CD8-positive, alpha-beta T cell (primary cell): ENCODE measurements at regions of chr11 and their contacts with region 1.

Region 1: DNA sequence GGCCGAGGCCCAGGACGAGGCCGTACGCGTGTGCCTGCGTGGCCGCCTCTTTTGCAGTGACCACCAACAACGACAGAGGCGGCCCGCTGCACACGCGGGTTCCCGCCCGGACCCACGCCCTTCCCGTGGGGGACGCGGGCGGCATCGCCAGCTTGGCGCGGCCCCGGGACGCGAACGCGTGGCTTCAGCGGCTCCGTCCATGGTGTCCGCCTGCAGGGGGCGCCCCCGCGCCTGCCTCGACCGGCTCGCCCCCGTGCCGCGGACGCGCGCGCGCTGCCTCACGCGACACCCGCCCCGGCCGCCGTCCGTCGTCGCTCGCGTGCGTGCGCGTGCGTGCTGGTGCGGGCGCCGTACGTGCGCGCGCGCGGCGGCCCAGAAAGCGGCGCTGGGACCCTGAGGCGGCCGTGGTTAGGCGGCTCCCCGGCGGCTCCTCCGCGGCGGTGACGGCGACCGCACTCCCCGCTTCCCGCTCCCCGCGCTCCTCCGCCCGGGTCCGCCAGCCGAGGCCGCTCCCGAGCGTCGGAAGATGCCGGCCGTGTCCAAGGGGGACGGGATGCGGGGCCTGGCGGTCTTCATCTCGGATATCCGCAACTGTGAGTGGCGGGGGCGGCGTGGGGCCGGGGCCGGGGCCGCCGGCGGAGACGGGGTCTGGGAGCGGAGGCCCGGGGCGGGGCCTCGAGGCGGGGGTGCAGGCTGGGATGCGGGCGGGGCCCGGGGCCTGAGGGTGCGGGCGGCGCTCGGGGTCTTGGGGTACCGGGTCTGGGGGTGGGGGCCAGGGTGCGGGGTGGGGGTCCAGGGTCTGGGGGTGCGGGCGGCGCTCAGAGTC is at the start of gene AP2A2:
- DNase-seq: peak; percentile 76 to 96 (median 92)
- ATAC-seq: peak; percentile 72
- H3K4me3 ChIP-seq: peak within 1 kb of the TSS; percentile 48 to 70
- H3K4me3 Mint-ChIP-seq: peak within 1 kb of the TSS; percentile 82
- H3K27ac ChIP-seq: peak within 1 kb of the TSS; percentile 37 to 67
- H3K27ac Mint-ChIP-seq: peak within 1 kb of the TSS; percentile 88
- H3K4me1 ChIP-seq: peaks cover 41% of the 10 kb centered on the region
- H3K4me1 Mint-ChIP-seq: peaks cover 32% of the 10 kb centered on the region
- H3K27me3 ChIP-seq: no peaks in the 10 kb centered on the region
- H3K27me3 Mint-ChIP-seq: no peaks in the 10 kb centered on the region
- CTCF ChIP-seq: peak; percentile 67
- total RNA-seq, gene AP2A2: 38.6 to 44.3 TPM

Region 2: DNA sequence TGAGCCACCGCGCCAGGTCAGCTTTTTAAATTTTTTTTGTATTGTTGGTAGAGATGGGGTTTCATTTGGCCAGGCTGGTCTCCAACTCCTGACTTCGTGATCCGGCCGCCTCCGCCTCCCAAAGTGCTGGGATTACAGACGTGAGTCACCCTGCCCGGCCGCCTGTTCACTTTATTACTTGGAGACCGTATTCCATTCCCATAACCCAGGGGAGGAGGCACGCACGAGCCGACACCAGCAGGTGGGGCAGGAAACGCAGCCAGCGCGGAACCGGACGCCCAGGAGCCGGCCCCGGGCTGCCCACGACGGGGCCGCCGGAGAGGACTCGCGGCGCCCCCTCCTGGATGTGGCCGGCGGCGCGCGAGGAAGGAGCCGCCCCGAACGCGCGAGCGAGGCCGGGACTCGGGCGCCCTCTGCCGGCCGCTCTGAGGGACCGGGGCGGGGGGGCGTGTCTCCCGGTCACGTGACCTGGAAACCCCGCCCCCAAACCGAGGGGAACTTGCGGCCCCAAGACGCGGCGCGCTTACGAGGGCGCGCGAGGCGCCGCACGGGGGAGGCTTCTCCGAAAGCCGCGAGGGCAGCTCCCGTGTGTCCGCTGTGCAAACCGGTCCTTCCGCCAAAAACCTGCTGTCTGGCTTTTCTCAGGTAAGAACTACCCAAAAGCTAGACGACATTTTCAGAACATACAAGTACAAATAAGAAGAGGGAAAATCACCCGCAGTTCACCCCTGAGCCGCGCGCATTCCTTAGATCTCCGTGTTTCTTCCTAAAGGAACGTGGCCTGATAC is 407.1 kb before region 1 on chr11:
- CTCF ChIA-PET with region 1: no interaction called
- POLR2A ChIA-PET with region 1: no interaction called
- intact Hi-C with region 1: loop called in 1 of 2 experiments (anchors 5 kb)
- DNase-seq: peak; percentile 82 to 98 (median 92)
- ATAC-seq: peak; percentile 95
- H3K4me3 ChIP-seq: peak overlapping the region; percentile 43 to 46
- H3K4me3 Mint-ChIP-seq: peak overlapping the region; percentile 79
- H3K27ac ChIP-seq: peak overlapping the region in 1 of 2 experiments; percentile 59
- H3K27ac Mint-ChIP-seq: peak overlapping the region; percentile 81
- H3K4me1 ChIP-seq: peaks cover 4% of the 10 kb centered on the region
- H3K4me1 Mint-ChIP-seq: peaks cover 5% of the 10 kb centered on the region
- H3K27me3 ChIP-seq: no peaks in the 10 kb centered on the region
- H3K27me3 Mint-ChIP-seq: no peaks in the 10 kb centered on the region
- CTCF ChIP-seq: peak; percentile 99

Region 3: GRCh38 chr11:842370-843002 is 83.2 kb before region 1 on chr11 and contains the starts of genes POLR2L and TSPAN4:
- CTCF ChIA-PET with region 1: interaction called, 6 read pairs
- POLR2A ChIA-PET with region 1: no interaction called
- intact Hi-C with region 1: loop called (anchors 5 kb)
- DNase-seq: peak; percentile 77 to 94 (median 88)
- ATAC-seq: peak; percentile 83
- H3K4me3 ChIP-seq: peak within 1 kb of the TSS; percentile 90 to 92
- H3K4me3 Mint-ChIP-seq: peak within 1 kb of the TSS; percentile 84
- H3K27ac ChIP-seq: peak within 1 kb of the TSS; percentile 50 to 78
- H3K27ac Mint-ChIP-seq: peak within 1 kb of the TSS; percentile 45
- H3K4me1 ChIP-seq: peaks cover 32% of the 10 kb centered on the region
- H3K4me1 Mint-ChIP-seq: peaks cover 25% of the 10 kb centered on the region
- H3K27me3 ChIP-seq: peaks cover 0 to 7% of the 10 kb centered on the region in 2 experiments
- H3K27me3 Mint-ChIP-seq: peaks cover 2% of the 10 kb centered on the region
- CTCF ChIP-seq: no peak
- total RNA-seq, gene POLR2L: 22.8 to 26.2 TPM
- total RNA-seq, gene TSPAN4: 2.1 to 2.2 TPM

Region 4: DNA sequence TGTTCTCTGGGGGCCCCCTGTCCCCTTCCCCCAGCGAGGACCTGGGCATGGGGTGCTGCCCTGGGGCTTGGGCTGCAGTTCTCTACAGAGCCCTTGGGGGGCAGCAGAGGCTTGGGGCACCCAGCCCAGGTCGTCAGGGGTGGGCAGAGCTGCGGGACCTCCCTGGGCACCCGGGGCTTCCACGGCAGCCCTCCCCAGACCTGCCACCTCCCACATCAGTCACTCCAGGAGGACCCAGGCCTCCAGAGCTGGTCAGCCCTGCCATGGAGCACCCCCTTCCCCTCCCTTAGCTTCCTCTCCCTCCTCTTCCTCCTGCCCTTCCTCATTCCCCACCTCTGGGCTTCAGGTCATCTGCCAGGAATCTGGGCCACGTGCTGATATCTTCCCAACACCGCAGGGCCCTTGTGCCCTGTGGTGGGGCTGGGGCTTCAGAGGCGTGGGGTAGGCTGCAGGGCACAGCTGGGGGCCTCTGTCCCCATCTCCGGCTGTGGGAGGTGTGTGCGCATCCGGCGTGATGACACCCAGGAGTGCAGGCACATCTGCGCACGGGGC is 77.3 kb before region 1 on chr11:
- CTCF ChIA-PET with region 1: interaction called, 6 read pairs
- POLR2A ChIA-PET with region 1: no interaction called
- intact Hi-C with region 1: loop called (anchors 5 kb)
- DNase-seq: peak; percentile 40 to 80 (median 68)
- ATAC-seq: peak; percentile 86
- H3K4me3 ChIP-seq: peak overlapping the region in 1 of 2 experiments; percentile 3
- H3K4me3 Mint-ChIP-seq: peak overlapping the region; percentile 26
- H3K27ac ChIP-seq: no peak overlapping the region
- H3K27ac Mint-ChIP-seq: no peak overlapping the region
- H3K4me1 ChIP-seq: peaks cover 26% of the 10 kb centered on the region
- H3K4me1 Mint-ChIP-seq: peaks cover 15% of the 10 kb centered on the region
- H3K27me3 ChIP-seq: peaks cover 0 to 22% of the 10 kb centered on the region in 2 experiments
- H3K27me3 Mint-ChIP-seq: peaks cover 5% of the 10 kb centered on the region
- CTCF ChIP-seq: peak; percentile 79

Region 5: DNA sequence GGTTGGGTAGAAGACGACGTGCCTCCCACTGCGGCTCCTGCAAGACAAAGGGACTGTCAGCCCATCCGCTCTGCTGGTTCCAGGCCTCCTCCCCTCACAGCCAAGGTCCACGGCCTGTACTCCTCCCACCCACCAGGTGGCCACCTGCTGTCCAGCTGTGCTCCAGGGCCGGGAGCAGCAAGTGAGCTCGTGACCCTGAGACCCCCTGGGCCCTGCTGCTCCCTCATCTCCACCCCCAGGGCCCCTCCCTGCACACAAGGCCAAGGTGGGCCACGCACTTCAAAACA is 55.6 kb before region 1 on chr11:
- CTCF ChIA-PET with region 1: no interaction called
- POLR2A ChIA-PET with region 1: no interaction called
- intact Hi-C with region 1: no loop called
- DNase-seq: no peak
- ATAC-seq: no peak
- H3K4me3 ChIP-seq: no peak overlapping the region
- H3K4me3 Mint-ChIP-seq: no peak overlapping the region
- H3K27ac ChIP-seq: no peak overlapping the region
- H3K27ac Mint-ChIP-seq: no peak overlapping the region
- H3K4me1 ChIP-seq: no peaks in the 10 kb centered on the region
- H3K4me1 Mint-ChIP-seq: no peaks in the 10 kb centered on the region
- H3K27me3 ChIP-seq: no peaks in the 10 kb centered on the region
- H3K27me3 Mint-ChIP-seq: no peaks in the 10 kb centered on the region
- CTCF ChIP-seq: no peak

Region 6: DNA sequence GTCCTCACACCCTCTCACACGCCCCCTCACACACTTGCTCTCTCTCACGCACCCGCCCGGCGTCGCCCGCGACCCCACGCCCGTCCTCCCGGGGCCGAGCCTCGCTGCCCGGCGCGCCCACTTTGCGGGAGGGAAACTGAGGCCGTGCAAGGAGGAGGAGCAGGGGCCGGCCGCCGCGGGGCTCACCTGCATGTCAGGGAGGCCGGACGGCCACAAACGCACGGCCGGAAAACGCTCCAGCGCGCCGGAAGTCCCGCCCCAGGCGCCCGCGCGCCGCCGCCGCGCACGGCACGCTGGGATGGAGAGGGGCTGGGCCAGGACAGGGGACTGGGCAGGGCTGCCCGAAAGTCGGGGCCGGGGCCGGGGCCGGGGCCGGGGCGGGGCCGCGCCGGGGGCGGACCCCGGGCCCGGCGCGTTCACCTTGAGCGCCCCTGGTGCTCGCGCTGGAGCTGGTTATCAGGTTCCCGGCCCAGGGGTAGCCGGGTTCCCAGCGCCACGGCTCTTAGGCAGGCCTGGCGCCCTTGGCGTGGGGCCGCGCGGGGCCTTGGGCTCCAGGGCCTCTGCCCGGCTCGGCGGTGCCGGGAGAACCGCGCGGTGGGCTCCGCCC is 15.0 kb before region 1 on chr11 and contains the start of gene CHID1:
- CTCF ChIA-PET with region 1: interaction called, 7 read pairs
- POLR2A ChIA-PET with region 1: interaction called, 3 read pairs
- intact Hi-C with region 1: loop called (anchors 1 kb)
- DNase-seq: peak; percentile 51 to 89 (median 80)
- ATAC-seq: peak; percentile 94
- H3K4me3 ChIP-seq: peak within 1 kb of the TSS; percentile 63 to 92
- H3K4me3 Mint-ChIP-seq: peak within 1 kb of the TSS; percentile 91
- H3K27ac ChIP-seq: peak within 1 kb of the TSS; percentile 28 to 47
- H3K27ac Mint-ChIP-seq: peak within 1 kb of the TSS; percentile 71
- H3K4me1 ChIP-seq: peaks cover 16% of the 10 kb centered on the region
- H3K4me1 Mint-ChIP-seq: peaks cover 23% of the 10 kb centered on the region
- H3K27me3 ChIP-seq: no peaks in the 10 kb centered on the region
- H3K27me3 Mint-ChIP-seq: no peaks in the 10 kb centered on the region
- CTCF ChIP-seq: no peak
- total RNA-seq, gene CHID1: 16.0 to 18.1 TPM

Region 7: DNA sequence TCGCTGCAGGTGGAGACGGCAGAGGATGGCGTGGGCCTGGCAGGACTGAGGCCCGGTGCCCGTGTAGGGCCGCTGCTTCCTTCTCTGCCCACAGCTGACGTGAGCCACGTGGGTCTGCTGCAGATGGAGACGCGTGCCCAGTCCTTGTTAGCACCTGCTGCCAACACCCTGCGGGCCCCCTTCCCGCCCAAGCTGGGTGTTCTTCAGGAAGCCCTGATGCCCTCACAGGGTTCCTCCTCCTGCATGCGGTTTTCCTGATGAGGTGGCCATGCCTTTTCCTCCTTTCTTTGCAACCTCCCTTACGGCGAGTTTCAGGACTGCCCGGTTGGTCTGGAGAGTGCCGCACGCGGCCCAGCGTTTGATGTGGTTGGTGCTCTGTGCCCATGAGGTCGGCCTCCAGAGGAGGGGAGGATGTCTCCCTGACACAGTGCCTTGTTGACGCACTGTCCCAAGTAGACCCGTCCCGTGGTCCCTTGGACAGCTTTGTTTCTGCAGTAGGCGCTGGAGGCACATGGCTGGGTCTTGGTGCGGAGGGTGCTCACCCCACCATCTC is 44.7 kb after region 1 on chr11:
- CTCF ChIA-PET with region 1: interaction called, 3 read pairs
- POLR2A ChIA-PET with region 1: no interaction called
- intact Hi-C with region 1: loop called (anchors 5 kb)
- DNase-seq: peak in 4 of 9 experiments; percentile 20 to 55 (median 50)
- ATAC-seq: peak; percentile 80
- H3K4me3 ChIP-seq: no peak overlapping the region
- H3K4me3 Mint-ChIP-seq: peak overlapping the region; percentile 52
- H3K27ac ChIP-seq: no peak overlapping the region
- H3K27ac Mint-ChIP-seq: peak overlapping the region; percentile 55
- H3K4me1 ChIP-seq: peaks cover 29% of the 10 kb centered on the region
- H3K4me1 Mint-ChIP-seq: peaks cover 40% of the 10 kb centered on the region
- H3K27me3 ChIP-seq: no peaks in the 10 kb centered on the region
- H3K27me3 Mint-ChIP-seq: no peaks in the 10 kb centered on the region
- CTCF ChIP-seq: no peak

Region 8: DNA sequence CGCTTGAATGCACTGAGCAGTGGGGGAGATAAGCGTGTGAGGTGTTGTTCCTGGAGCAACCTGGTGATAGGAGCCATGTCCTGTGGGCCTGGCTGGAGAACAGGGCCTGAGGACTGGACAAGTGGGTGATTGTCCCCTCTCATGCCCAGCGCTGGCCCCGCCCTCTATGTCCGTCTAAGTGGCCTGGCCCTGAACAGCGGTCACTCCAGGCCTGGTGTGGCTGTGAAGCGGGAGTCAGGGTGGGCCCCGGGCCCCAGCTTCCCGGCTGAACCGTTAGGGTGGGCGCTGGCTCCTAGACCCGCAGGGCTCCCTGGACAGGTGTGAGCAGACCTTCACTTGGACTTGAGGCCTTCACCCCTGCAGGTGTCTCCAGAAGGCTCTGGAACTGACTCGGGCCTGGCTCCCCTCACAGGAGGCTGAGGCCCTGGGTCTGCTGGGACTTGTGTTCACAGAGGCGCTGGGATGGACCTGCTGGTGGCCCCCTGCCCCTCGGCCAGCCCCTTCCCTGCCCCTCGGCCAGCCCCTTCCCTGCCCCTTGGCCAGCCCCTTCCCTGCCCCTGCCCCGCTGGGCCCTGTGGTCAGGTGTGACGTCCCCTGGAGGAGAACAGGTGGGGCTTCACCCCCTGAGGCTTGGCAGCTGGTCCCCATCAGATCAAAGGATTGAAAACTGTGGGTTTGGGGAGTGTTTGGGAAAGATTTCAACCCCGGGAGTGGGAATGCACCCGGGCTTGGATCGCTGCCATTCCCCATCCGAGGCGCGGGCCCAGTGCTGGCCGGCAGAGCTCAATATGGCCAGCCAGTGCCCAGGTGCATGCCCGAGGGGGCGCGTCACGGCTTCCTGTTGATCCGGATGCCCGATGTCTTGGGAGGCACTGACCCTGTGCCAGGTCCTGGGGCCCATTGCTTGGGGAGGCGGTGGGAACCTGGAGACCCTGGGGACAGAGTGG is 114.0 kb after region 1 on chr11:
- CTCF ChIA-PET with region 1: no interaction called
- POLR2A ChIA-PET with region 1: no interaction called
- intact Hi-C with region 1: no loop called
- DNase-seq: peak in 1 of 9 experiments; percentile 2
- ATAC-seq: no peak
- H3K4me3 ChIP-seq: no peak overlapping the region
- H3K4me3 Mint-ChIP-seq: no peak overlapping the region
- H3K27ac ChIP-seq: no peak overlapping the region
- H3K27ac Mint-ChIP-seq: no peak overlapping the region
- H3K4me1 ChIP-seq: no peaks in the 10 kb centered on the region
- H3K4me1 Mint-ChIP-seq: no peaks in the 10 kb centered on the region
- H3K27me3 ChIP-seq: no peaks in the 10 kb centered on the region
- H3K27me3 Mint-ChIP-seq: peaks cover 4% of the 10 kb centered on the region
- CTCF ChIP-seq: no peak

Region 9: GRCh38 chr11:1050581-1051355 is 125.1 kb after region 1 on chr11:
- CTCF ChIA-PET with region 1: interaction called, 6 read pairs
- POLR2A ChIA-PET with region 1: no interaction called
- intact Hi-C with region 1: loop called in 1 of 2 experiments (anchors 1 kb)
- DNase-seq: peak; percentile 54 to 85 (median 70)
- ATAC-seq: peak; percentile 99
- H3K4me3 ChIP-seq: no peak overlapping the region
- H3K4me3 Mint-ChIP-seq: no peak overlapping the region
- H3K27ac ChIP-seq: no peak overlapping the region
- H3K27ac Mint-ChIP-seq: no peak overlapping the region
- H3K4me1 ChIP-seq: peaks cover 5% of the 10 kb centered on the region
- H3K4me1 Mint-ChIP-seq: no peaks in the 10 kb centered on the region
- H3K27me3 ChIP-seq: peaks cover 0 to 11% of the 10 kb centered on the region in 2 experiments
- H3K27me3 Mint-ChIP-seq: peaks cover 18% of the 10 kb centered on the region
- CTCF ChIP-seq: peak; percentile 87

Region 10: DNA sequence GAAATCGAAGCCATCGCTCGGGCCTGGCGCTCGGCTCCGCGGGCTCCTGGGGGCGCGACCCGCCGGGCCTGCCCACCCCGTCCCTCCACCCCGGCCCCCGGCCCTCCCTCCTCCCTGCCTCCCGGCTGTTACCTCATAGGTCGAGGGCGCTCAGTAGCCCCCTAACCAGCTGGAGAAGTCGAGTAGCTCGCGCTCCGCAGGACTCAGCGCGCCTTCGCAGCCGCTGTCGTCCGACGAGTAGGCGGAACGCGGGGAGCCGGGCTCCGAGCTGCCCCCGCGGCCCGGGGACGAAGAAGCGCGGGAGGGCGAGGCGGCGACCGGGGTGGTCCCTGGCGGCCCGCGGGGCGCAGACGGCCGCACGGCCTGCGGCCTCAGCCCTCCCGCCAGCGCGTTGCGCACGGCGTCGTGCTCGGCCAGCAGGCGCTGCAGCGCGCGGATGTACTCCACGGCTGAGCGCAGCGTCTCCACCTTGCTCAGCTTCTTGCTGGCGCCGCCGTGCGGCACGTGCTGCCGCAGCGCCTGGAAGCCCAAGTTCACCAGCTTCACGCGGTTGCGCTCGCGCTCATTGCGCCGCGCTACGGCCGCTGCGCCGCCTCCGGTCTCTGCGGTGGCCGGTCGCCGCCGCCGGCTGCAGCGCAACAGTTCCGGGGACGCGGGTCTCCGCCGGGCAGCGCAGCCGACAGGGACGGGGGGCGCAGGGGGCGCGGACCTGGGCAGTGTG is 1344.1 kb after region 1 on chr11:
- CTCF ChIA-PET with region 1: no interaction called
- POLR2A ChIA-PET with region 1: no interaction called
- intact Hi-C with region 1: no loop called
- DNase-seq: peak in 7 of 9 experiments; percentile 34 to 85 (median 56)
- ATAC-seq: peak; percentile 54
- H3K4me3 ChIP-seq: peak overlapping the region; percentile 43 to 51
- H3K4me3 Mint-ChIP-seq: peak overlapping the region; percentile 60
- H3K27ac ChIP-seq: no peak overlapping the region
- H3K27ac Mint-ChIP-seq: no peak overlapping the region
- H3K4me1 ChIP-seq: peaks cover 34% of the 10 kb centered on the region
- H3K4me1 Mint-ChIP-seq: peaks cover 29% of the 10 kb centered on the region
- H3K27me3 ChIP-seq: peaks cover 0 to 9% of the 10 kb centered on the region in 2 experiments
- H3K27me3 Mint-ChIP-seq: peaks cover 15% of the 10 kb centered on the region
- CTCF ChIP-seq: no peak